ENCODE measurements at regions of chr18 and their contacts with region 1.

Region 1: GRCh38 chr18:27599202-27599829 is 414.2 kb upstream of the CHST9 start:
- DNase-seq: peak; percentile 34
- ATAC-seq: no peak

Region 2: GRCh38 chr18:27363872-27364271 is 235.4 kb before region 1 on chr18:
- intact Hi-C with region 1: loop called (anchors 2 kb)
- DNase-seq: no peak
- ATAC-seq: no peak

Region 3: DNA sequence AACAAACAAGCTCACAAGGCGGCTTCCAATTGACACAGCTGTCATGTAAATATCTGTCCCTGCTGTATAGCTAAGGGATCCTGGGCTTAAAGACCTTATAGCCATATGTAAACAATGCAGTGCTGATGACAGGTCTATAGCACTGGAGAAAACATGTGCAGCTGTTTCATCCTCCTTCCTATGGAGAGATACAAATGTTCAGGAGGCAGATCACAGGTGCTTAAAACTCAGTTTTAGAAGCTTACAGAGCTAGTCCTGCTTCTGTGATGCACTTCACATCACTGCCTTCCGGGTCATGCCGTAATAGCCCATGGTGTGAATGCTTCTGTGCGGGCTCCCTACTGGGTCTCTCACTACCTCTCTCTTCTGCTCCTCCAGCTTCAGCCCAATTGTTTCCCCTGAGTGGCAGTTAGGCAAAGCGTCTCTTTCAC is 151.8 kb before region 1 on chr18:
- intact Hi-C with region 1: no loop called
- DNase-seq: no peak
- ATAC-seq: no peak

Measured in left ventricle myocardium superior (tissue), 1 donor.